CD4-positive, alpha-beta T cell (primary cell): ENCODE measurements at regions of chr16 and their contacts with region 1.

Region 1: GRCh38 chr16:20806168-20807050 is at the starts of genes ERI2 and REXO5:
- DNase-seq: peak; percentile 49 to 87 (median 62)
- ATAC-seq: peak; percentile 88
- H3K4me3 ChIP-seq: peak within 1 kb of the TSS; percentile 92
- H3K4me3 Mint-ChIP-seq: peak within 1 kb of the TSS; percentile 98
- H3K27ac ChIP-seq: peak within 1 kb of the TSS; percentile 49 to 72
- H3K27ac Mint-ChIP-seq: peak within 1 kb of the TSS; percentile 81
- H3K4me1 ChIP-seq: peaks cover 23% of the 10 kb centered on the region
- H3K4me1 Mint-ChIP-seq: peaks cover 17% of the 10 kb centered on the region
- H3K27me3 ChIP-seq: no peaks in the 10 kb centered on the region
- H3K27me3 Mint-ChIP-seq: no peaks in the 10 kb centered on the region
- CTCF ChIP-seq: peak; percentile 33
- total RNA-seq, gene ERI2: 0.25 to 0.45 TPM
- total RNA-seq, gene REXO5: 0.56 TPM in 1 of 2 experiments, not detected in the other

Region 2: DNA sequence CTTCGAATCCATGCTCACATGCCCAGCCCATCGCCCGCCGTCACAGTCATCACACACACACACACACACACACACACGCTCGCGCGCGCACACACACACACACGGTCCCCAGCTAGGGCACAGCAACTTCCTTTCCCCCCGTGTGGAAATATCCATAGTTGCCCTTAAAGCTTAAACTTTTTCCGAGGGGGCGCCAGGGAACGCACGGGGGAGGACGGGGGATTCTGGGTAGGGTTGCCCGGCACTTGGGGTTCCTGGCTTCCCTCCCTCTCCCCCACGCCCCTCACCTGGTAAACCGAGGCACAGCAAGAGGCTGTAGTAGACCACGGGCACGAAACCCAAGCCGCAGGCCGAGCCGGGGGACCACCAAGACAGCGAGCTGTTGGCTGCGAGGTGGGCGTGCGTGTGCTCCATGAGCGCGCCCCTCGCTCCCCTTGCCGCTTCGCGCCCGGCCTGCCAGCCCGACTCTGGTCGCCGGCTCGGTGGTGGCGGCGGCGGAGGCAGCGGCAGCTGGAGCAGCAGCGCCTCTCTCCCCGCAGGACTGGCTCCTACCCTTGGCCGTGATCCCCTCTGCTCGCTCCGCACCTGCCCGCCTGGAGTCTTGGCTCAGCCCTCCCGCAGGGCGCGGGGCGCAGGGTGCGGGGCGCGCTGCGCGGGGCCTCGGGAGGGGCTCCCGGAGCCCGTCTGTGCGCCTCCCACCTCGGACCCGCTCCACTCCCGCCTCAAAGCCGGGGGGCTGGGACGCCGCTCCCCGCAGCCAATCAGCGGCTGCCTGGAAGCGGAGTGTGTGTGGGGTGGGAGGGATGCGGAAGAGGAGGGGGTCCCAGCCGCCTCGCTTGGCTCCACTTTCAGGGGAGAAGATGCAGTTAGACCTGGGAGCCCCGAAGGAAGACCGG is 733.0 kb before region 1 on chr16 and contains the start of gene GPR139:
- CTCF ChIA-PET with region 1: no interaction called
- POLR2A ChIA-PET with region 1: no interaction called
- intact Hi-C with region 1: no loop called
- DNase-seq: no peak
- ATAC-seq: no peak
- H3K4me3 ChIP-seq: no peak within 1 kb of the TSS
- H3K4me3 Mint-ChIP-seq: no peak within 1 kb of the TSS
- H3K27ac ChIP-seq: no peak within 1 kb of the TSS
- H3K27ac Mint-ChIP-seq: no peak within 1 kb of the TSS
- H3K4me1 ChIP-seq: no peaks in the 10 kb centered on the region
- H3K4me1 Mint-ChIP-seq: no peaks in the 10 kb centered on the region
- H3K27me3 ChIP-seq: peaks cover 11 to 23% of the 10 kb centered on the region in 2 experiments
- H3K27me3 Mint-ChIP-seq: peaks cover 64% of the 10 kb centered on the region
- CTCF ChIP-seq: no peak
- total RNA-seq, gene GPR139: not detected

Region 3: DNA sequence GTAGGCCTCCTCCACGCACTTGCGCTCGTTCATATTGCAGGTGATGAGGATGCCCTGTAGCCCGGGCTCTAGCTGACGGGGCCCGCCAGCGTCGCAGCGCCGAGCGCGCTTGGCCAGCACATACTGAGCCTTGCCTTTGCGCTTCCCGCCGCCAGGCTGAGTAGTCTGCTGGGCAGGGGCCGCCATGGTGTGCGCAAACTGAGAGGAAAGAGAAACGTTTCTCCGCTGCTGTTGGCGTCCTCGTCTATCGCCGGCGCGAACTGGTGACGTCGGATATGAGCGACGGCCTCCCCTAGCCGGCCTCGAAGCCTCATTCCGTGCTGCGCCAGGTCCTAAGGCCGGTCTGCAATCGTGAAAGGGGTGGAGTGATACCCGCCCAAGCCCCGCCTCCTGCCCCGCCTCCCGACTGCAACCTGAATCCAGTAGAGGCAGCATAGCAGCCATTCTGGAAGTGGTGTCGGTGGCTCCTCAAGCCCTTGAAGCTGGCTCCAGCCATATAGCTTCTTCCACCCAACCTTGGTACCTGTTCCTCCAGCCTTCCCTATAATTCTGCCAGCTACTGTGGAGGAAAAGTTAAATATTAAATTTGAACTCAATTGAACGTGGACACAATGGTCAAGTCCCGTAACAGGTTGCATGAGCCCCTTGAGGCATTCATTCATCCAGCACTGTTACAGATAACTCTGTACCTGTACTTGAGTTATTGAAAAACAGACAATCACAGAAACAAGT is 64.7 kb before region 1 on chr16 and contains the start of gene THUMPD1:
- CTCF ChIA-PET with region 1: no interaction called
- POLR2A ChIA-PET with region 1: interaction called, 12 read pairs
- intact Hi-C with region 1: loop called (anchors 2 to 5 kb)
- DNase-seq: peak; percentile 94 to 99 (median 98)
- ATAC-seq: peak; percentile 92
- H3K4me3 ChIP-seq: peak within 1 kb of the TSS; percentile 100
- H3K4me3 Mint-ChIP-seq: peak within 1 kb of the TSS; percentile 97
- H3K27ac ChIP-seq: peak within 1 kb of the TSS; percentile 99 to 100
- H3K27ac Mint-ChIP-seq: peak within 1 kb of the TSS; percentile 99
- H3K4me1 ChIP-seq: peaks cover 35% of the 10 kb centered on the region
- H3K4me1 Mint-ChIP-seq: peaks cover 34% of the 10 kb centered on the region
- H3K27me3 ChIP-seq: no peaks in the 10 kb centered on the region
- H3K27me3 Mint-ChIP-seq: no peaks in the 10 kb centered on the region
- CTCF ChIP-seq: no peak
- total RNA-seq, gene THUMPD1: 105 to 107 TPM

Region 4: DNA sequence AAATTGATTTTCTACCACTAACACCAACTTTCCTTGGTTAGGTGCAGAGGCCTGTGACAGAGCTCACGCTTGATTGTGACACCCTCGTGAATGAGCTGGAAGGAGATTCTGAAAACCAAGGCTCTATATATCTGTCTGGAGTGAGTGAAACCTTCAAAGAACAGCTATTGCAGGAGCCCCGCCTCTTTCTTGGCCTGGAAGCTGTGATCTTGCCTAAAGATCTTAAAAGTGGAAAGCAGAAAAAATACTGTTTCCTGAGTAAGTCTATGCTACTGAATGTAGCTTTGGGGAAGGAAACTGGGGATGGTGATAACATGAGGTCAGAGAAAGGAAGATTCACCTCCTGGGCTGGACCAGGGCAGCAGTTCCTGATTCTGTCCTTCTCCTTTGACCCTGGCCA is 38.2 kb after region 1 on chr16:
- CTCF ChIA-PET with region 1: no interaction called
- POLR2A ChIA-PET with region 1: interaction called, 10 read pairs
- intact Hi-C with region 1: no loop called
- DNase-seq: peak in 5 of 14 experiments; percentile 14 to 50 (median 36)
- ATAC-seq: peak; percentile 82
- H3K4me3 ChIP-seq: no peak overlapping the region
- H3K4me3 Mint-ChIP-seq: peak overlapping the region; percentile 50
- H3K27ac ChIP-seq: peak overlapping the region in 1 of 2 donors; percentile 47
- H3K27ac Mint-ChIP-seq: peak overlapping the region; percentile 62
- H3K4me1 ChIP-seq: peaks cover 16% of the 10 kb centered on the region
- H3K4me1 Mint-ChIP-seq: peaks cover 23% of the 10 kb centered on the region
- H3K27me3 ChIP-seq: no peaks in the 10 kb centered on the region
- H3K27me3 Mint-ChIP-seq: no peaks in the 10 kb centered on the region
- CTCF ChIP-seq: no peak